ENCODE measurements at regions of chr18 and their contacts with region 1.

Region 1: DNA sequence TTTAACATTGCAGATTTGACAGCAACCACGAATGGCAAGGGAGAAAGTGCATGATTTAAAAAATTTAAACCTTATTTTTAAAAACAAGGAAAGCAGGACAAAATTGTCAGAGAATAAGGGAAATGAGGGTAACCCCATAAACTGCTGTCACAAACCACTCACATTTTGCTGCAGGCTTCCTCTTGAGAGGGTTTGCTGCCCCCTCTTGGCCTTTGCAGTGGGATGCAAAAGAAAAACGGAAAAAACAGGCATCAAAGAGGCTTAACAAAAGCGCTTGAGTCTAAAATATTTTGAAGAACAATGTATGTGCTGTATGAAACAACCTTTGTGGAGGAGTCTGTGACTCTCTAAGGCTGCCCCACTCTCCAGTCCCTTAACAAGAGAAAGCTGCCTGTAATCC is 91.6 kb downstream of the TMX3 start:
- DNase-seq: peak; percentile 45
- H3K4me3 ChIP-seq: no peak overlapping the region
- H3K27ac ChIP-seq: no peak overlapping the region
- H3K4me1 ChIP-seq: no peaks in the 10 kb centered on the region
- H3K27me3 ChIP-seq: no peaks in the 10 kb centered on the region
- CTCF ChIP-seq: peak; percentile 81 to 89

Region 2: DNA sequence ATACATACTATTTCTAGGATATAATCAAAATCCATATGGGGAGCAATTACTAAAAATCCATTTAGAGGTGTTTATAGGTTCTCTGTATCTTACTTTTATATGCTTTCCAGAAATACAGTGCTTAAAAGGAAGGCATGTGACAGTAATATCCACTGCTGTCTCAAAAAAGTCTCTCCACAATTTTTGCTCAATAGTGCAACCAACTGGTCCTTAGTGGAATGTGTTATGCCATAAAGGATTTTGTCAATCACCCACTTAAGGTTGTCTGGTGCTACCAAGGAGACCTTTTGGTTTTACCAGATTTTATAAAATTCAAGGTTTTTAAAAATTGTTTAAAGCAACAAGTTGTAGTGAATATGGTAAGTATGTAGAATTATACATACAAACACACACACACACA is 778.3 kb before region 1 on chr18:
- CTCF ChIA-PET with region 1: no interaction called
- dilution Hi-C with region 1: no loop called
- in situ Hi-C with region 1: no loop called
- intact Hi-C with region 1: loop called (anchors 10 kb)
- DNase-seq: peak; percentile 13
- H3K4me3 ChIP-seq: no peak overlapping the region
- H3K27ac ChIP-seq: no peak overlapping the region
- H3K4me1 ChIP-seq: no peaks in the 10 kb centered on the region
- H3K27me3 ChIP-seq: no peaks in the 10 kb centered on the region
- CTCF ChIP-seq: peak; percentile 9 to 53

Region 3: DNA sequence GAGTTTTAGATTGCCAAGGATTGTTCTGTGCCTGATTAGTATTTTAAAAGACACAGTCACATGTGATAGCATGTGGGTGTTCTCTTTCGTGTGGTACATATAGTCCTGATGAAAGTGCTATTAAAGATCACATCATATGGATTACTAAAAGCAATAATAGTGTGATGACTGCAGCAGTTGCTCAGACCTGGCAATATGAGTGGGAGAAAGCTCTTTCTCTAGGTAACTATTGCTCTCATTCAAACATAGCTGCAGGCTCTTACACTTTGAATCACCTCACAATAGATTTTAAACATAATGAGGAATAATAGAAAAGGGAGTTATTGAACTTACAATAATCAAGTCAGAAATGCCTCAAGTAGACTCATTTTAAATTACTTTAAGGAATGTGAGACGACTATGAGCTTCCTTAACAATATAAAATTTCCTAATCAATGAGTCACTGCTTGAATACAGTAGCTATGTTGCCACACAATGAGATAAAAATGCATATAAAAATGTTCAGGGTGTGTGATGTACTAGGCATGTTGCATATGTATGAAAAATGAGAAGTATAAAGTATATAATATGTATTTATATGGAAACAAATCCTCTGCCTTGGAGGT is 360.6 kb before region 1 on chr18:
- CTCF ChIA-PET with region 1: no interaction called
- dilution Hi-C with region 1: no loop called
- in situ Hi-C with region 1: no loop called
- intact Hi-C with region 1: loop called (anchors 5 kb)
- DNase-seq: peak; percentile 83
- H3K4me3 ChIP-seq: peak overlapping the region in 2 of 3 experiments; percentile 10 to 16
- H3K27ac ChIP-seq: peak overlapping the region; percentile 98
- H3K4me1 ChIP-seq: peaks cover 29% of the 10 kb centered on the region
- H3K27me3 ChIP-seq: no peaks in the 10 kb centered on the region
- CTCF ChIP-seq: no peak

Region 4: DNA sequence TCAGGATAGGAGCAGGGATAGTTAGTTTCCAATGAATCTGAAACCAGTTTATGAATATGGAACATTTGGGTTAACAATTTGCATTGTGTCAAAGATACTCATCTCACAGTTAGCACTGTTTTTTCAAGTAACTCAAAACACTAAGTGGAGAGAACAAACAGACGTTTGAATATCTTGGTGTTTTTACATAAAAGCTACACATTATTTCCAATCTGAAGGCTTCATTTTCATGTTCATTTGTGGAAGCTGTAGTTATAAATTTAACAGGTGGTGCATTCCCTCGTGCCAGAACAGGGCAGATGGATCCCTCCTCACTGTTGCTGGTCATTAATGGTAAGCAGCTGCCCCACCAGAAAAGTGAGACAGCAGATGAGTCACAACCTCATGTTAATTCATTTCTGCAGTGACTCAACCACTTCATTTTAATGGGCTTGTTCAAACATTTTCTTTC is 195.4 kb before region 1 on chr18:
- CTCF ChIA-PET with region 1: no interaction called
- dilution Hi-C with region 1: no loop called
- in situ Hi-C with region 1: no loop called
- intact Hi-C with region 1: loop called (anchors 10 kb)
- DNase-seq: peak; percentile 92
- H3K4me3 ChIP-seq: no peak overlapping the region
- H3K27ac ChIP-seq: peak overlapping the region; percentile 77
- H3K4me1 ChIP-seq: peaks cover 52% of the 10 kb centered on the region
- H3K27me3 ChIP-seq: no peaks in the 10 kb centered on the region
- CTCF ChIP-seq: no peak

Region 5: GRCh38 chr18:68796936-68797690 is 173.8 kb after region 1 on chr18:
- CTCF ChIA-PET with region 1: no interaction called
- dilution Hi-C with region 1: no loop called
- in situ Hi-C with region 1: no loop called
- intact Hi-C with region 1: no loop called
- DNase-seq: no peak
- H3K4me3 ChIP-seq: no peak overlapping the region
- H3K27ac ChIP-seq: no peak overlapping the region
- H3K4me1 ChIP-seq: no peaks in the 10 kb centered on the region
- H3K27me3 ChIP-seq: no peaks in the 10 kb centered on the region
- CTCF ChIP-seq: no peak